Activated CD8-positive, alpha-beta T cell treated with anti-CD3 and anti-CD28 coated beads for 36 hours (primary cell): ENCODE measurements at regions of chr12 and their contacts with region 1.

Region 1: DNA sequence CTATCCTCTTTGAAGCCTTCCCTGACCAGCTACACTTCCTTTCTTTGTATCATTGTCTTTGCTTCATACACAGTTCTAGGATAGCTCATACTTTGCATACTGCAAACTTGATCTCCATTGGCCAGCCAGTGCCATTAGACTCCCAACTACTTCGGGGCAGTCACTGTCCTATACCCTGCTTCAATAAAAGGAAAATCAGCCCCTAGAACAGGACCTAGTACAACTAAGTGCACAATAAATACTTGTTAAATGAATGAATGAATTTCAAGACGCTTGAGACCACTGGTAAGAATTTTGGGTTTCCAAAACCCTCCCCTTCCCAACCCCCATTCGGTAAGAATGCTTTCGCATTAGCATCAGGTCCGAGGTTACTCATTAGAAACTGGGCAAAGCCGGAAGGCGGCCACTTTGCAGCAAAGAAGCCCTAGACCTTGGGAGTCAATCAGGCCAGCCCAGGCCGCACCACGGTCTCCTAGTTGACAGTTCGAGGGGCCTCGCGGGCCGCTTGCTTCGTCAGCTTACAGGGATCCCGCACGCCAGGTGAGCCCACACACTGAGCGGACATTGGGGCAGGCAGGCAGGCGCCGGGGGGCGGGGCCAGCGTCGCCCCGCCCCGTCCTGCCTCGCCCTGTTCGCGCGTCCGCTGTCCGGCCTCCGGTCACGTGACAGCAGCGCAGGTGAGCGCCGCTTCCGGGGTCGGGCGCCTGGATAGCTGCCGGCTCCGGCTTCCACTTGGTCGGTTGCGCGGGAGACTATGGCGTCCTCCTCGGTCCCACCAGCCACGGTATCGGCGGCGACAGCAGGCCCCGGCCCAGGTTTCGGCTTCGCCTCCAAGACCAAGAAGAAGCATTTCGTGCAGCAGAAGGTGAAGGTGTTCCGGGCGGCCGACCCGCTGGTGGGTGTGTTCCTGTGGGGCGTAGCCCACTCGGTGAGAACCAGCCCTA is at the start of gene PIP4K2C:
- DNase-seq: peak; percentile 85
- ATAC-seq: peak; percentile 97
- H3K4me3 Mint-ChIP-seq: peak within 1 kb of the TSS; percentile 79
- H3K27ac Mint-ChIP-seq: peak within 1 kb of the TSS; percentile 77
- H3K4me1 Mint-ChIP-seq: peaks cover 24% of the 10 kb centered on the region
- H3K27me3 Mint-ChIP-seq: no peaks in the 10 kb centered on the region
- CTCF ChIP-seq: no peak
- total RNA-seq, gene PIP4K2C: 10.7 to 12.3 TPM

Region 2: GRCh38 chr12:57173089-57173488 is 417.7 kb before region 1 on chr12:
- CTCF ChIA-PET with region 1: no interaction called
- POLR2A ChIA-PET with region 1: no interaction called
- intact Hi-C with region 1: no loop called
- DNase-seq: peak; percentile 37
- ATAC-seq: peak; percentile 73
- H3K4me3 Mint-ChIP-seq: no peak overlapping the region
- H3K27ac Mint-ChIP-seq: no peak overlapping the region
- H3K4me1 Mint-ChIP-seq: no peaks in the 10 kb centered on the region
- H3K27me3 Mint-ChIP-seq: no peaks in the 10 kb centered on the region
- CTCF ChIP-seq: peak; percentile 62

Region 3: GRCh38 chr12:57541001-57541400 is 49.8 kb before region 1 on chr12:
- CTCF ChIA-PET with region 1: no interaction called
- POLR2A ChIA-PET with region 1: no interaction called
- intact Hi-C with region 1: no loop called
- DNase-seq: no peak
- ATAC-seq: no peak
- H3K4me3 Mint-ChIP-seq: no peak overlapping the region
- H3K27ac Mint-ChIP-seq: no peak overlapping the region
- H3K4me1 Mint-ChIP-seq: peaks cover 26% of the 10 kb centered on the region
- H3K27me3 Mint-ChIP-seq: no peaks in the 10 kb centered on the region
- CTCF ChIP-seq: no peak

Region 4: GRCh38 chr12:57604454-57604991 is 13.7 kb after region 1 on chr12 and contains the start of gene DTX3:
- CTCF ChIA-PET with region 1: interaction called, 4 read pairs
- POLR2A ChIA-PET with region 1: interaction called, 18 read pairs
- intact Hi-C with region 1: no loop called
- DNase-seq: peak; percentile 66
- ATAC-seq: peak; percentile 62
- H3K4me3 Mint-ChIP-seq: peak within 1 kb of the TSS; percentile 74
- H3K27ac Mint-ChIP-seq: peak within 1 kb of the TSS; percentile 81
- H3K4me1 Mint-ChIP-seq: peaks cover 25% of the 10 kb centered on the region
- H3K27me3 Mint-ChIP-seq: no peaks in the 10 kb centered on the region
- CTCF ChIP-seq: no peak
- total RNA-seq, gene DTX3: 13.7 to 15.1 TPM

Region 5: DNA sequence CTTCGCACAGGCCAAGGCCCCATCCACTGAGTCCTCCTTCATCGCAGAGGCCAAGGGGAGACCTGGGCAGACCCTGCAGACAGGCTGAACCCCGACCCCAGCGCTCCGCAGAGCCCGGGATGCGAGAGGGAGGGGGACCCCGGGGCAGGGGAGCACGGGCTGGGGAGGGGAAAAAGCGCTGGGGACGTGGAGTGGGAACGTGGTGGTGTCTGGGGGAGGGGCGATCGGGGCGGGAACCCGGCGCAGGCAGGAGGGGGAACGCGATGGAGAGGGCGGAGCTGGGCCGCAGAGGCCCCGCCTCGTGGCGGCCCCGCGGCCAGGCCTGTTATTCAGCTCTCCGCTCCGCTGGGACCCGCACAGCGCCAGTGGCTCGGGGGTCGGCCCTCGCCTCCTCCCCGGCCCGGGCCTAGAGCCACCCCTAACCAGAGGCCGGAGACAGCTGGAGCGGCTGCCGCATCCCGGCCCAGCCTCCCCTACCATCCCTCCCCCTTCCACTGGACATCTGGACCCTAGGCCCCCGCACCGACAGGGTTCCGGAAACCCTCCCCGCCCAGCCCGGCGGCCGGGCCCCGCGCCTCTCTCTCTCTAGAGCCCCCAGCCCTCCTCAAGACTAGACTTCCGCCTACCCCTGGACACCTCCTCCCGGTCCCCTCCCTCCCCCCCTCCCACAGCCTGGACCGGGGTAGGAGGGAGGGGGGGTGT is 20.5 kb after region 1 on chr12 and contains the start of gene ARHGEF25:
- CTCF ChIA-PET with region 1: interaction called, 60 read pairs
- POLR2A ChIA-PET with region 1: interaction called, 21 read pairs
- intact Hi-C with region 1: no loop called
- DNase-seq: peak; percentile 59
- ATAC-seq: peak; percentile 83
- H3K4me3 Mint-ChIP-seq: peak within 1 kb of the TSS; percentile 70
- H3K27ac Mint-ChIP-seq: no peak within 1 kb of the TSS
- H3K4me1 Mint-ChIP-seq: peaks cover 9% of the 10 kb centered on the region
- H3K27me3 Mint-ChIP-seq: peaks cover 12% of the 10 kb centered on the region
- CTCF ChIP-seq: no peak
- total RNA-seq, gene ARHGEF25: 1.1 to 1.2 TPM

Region 6: GRCh38 chr12:57627501-57628279 is 36.9 kb after region 1 on chr12:
- CTCF ChIA-PET with region 1: interaction called, 124 read pairs
- POLR2A ChIA-PET with region 1: no interaction called
- intact Hi-C with region 1: loop called (anchors 1 kb)
- DNase-seq: peak; percentile 59
- ATAC-seq: peak; percentile 65
- H3K4me3 Mint-ChIP-seq: peak overlapping the region; percentile 19
- H3K27ac Mint-ChIP-seq: no peak overlapping the region
- H3K4me1 Mint-ChIP-seq: peaks cover 12% of the 10 kb centered on the region
- H3K27me3 Mint-ChIP-seq: peaks cover 88% of the 10 kb centered on the region
- CTCF ChIP-seq: peak; percentile 51